ENCODE measurements at regions of chr2 and their contacts with region 1.

Region 1: GRCh38 chr2:161308178-161308955 is at the start of gene PSMD14:
- DNase-seq: peak; percentile 96
- H3K4me3 Mint-ChIP-seq: peak within 1 kb of the TSS; percentile 91
- H3K27ac Mint-ChIP-seq: peak within 1 kb of the TSS; percentile 92
- H3K4me1 Mint-ChIP-seq: peaks cover 37% of the 10 kb centered on the region
- H3K27me3 Mint-ChIP-seq: no peaks in the 10 kb centered on the region
- total RNA-seq, gene PSMD14: 84.2 to 89.8 TPM

Region 2: GRCh38 chr2:161136696-161137324 is 171.6 kb before region 1 on chr2:
- CTCF ChIA-PET with region 1: no interaction called
- POLR2A ChIA-PET with region 1: no interaction called
- intact Hi-C with region 1: loop called (anchors 1 kb)
- DNase-seq: peak; percentile 35
- H3K4me3 Mint-ChIP-seq: peak overlapping the region; percentile 96
- H3K27ac Mint-ChIP-seq: peak overlapping the region; percentile 100
- H3K4me1 Mint-ChIP-seq: peaks cover 45% of the 10 kb centered on the region
- H3K27me3 Mint-ChIP-seq: no peaks in the 10 kb centered on the region

Region 3: DNA sequence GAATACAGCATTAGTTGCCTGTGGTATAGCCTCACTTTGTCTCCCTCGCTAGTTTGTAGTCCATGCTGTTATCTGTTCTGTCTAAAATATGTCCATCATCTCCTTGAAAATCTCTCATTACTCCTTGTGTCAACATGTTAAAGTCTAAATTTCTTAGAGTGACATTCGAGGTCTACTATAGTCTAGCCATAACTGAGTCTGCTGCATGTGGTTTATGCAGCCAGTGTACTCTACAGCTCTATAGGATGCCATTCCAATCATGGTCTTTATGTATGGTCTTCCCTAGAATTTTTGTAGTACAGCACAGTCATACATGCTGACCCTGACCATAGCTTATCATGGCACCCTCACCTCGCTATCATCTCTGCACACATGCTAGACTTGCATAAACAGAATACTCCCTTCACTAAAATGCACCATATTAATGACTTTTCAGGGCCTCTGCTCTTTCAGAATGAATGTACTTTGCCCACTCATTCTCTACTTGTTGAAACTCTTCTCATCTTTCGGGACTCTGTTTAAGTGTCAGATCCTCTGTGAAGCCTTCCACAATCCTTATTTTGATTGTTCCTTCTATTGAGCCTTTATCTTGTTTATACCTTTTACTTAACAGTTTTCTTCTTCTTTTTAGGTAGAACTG is 135.3 kb before region 1 on chr2:
- CTCF ChIA-PET with region 1: no interaction called
- POLR2A ChIA-PET with region 1: no interaction called
- intact Hi-C with region 1: no loop called
- DNase-seq: peak; percentile 22
- H3K4me3 Mint-ChIP-seq: no peak overlapping the region
- H3K27ac Mint-ChIP-seq: peak overlapping the region; percentile 55
- H3K4me1 Mint-ChIP-seq: peaks cover 81% of the 10 kb centered on the region
- H3K27me3 Mint-ChIP-seq: no peaks in the 10 kb centered on the region

Region 4: DNA sequence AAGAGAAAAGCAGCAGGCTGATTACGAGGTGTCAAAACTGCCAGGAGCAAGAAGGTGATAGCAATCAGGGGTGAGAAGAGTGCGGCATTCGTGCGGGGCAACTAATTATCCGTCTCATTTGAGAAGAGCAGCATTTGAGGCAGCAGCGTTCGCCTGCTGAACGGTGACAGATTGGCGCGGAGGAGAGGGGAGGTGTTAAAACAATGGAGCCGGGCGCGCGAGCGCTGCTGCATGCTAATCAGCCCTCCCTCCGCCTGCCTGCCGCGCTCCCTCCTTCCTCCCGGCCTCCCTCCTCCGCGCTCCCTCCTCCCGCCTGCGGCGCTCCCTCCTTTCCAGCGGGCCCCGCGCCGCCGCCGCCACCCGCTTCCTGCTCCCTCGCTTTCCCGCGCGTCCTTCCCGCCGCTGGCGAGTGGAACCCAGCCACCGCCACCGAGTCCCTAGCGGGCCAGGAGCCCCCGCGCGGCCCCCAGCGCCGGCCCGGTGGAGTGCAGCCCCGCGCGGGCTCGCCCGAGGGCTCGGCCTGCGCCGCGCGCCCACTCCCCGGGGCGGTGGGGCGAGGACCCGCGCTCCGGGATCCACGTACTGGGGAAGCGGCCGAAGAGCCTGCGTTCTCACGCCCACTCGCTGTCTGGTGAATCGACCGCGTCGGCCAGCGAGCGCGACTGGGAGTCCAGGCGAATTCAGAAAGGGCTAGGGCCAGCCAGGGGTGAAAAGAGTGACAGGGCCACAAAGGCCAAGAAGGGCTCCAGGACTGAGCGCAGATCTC is 69.6 kb before region 1 on chr2:
- CTCF ChIA-PET with region 1: no interaction called
- POLR2A ChIA-PET with region 1: interaction called, 4 read pairs
- intact Hi-C with region 1: loop called (anchors 2 kb)
- DNase-seq: peak; percentile 71
- H3K4me3 Mint-ChIP-seq: peak overlapping the region; percentile 83
- H3K27ac Mint-ChIP-seq: peak overlapping the region; percentile 65
- H3K4me1 Mint-ChIP-seq: peaks cover 52% of the 10 kb centered on the region
- H3K27me3 Mint-ChIP-seq: no peaks in the 10 kb centered on the region

Region 5: GRCh38 chr2:161243905-161244304 is 64.5 kb before region 1 on chr2:
- CTCF ChIA-PET with region 1: no interaction called
- POLR2A ChIA-PET with region 1: interaction called, 4 read pairs
- intact Hi-C with region 1: loop called (anchors 1 kb)
- DNase-seq: peak; percentile 34
- H3K4me3 Mint-ChIP-seq: peak overlapping the region; percentile 89
- H3K27ac Mint-ChIP-seq: peak overlapping the region; percentile 91
- H3K4me1 Mint-ChIP-seq: peaks cover 54% of the 10 kb centered on the region
- H3K27me3 Mint-ChIP-seq: no peaks in the 10 kb centered on the region

Region 6: DNA sequence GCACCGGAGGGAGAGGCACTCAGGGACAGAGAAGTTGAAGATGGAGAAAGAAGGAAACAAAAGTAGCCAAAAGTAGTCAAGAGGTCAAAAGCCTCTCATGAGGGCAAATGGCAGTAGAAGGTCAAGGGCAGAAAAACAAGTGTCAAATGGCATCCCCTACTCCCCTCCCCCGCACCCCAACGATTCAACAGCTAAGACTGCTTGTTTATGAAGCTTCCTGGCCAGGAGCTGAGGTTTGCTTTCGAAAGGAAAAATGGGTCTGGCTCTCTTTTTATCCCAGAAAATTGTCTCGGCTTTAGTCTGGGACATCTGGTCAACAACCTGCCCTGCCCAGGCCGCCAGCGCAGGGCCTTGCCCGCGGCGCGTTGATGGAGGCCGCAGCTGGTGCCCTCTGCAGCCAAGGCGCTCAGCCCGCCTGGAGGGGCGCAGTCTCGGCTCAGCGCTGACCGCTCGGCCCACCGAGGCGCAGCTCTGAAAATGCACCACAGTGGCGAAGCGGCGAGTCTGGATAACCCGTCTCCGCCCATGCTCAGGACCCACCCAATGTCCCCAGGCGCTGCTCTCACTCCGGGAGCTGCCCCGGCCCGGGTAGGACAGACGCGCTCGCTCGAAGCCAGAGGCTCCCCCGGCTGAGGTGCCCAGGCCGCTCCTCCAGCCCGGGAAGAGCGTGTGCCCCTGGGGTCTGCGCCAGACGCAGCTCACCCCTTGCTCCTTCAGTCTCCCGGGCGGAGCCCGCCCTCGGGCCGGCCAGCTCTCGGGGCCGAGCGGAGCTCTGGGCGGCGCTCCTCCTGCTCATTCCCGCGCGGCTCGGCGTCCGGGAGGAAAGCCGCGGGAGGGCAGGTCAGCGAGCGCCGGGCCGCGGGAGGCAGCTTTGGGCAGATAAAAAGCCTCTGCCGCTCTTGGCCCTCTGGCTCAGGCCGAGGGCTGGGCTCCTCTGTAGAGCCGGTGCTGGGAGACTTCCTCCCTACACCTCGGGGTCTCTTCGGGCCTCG is 106.0 kb after region 1 on chr2:
- CTCF ChIA-PET with region 1: no interaction called
- POLR2A ChIA-PET with region 1: no interaction called
- intact Hi-C with region 1: loop called (anchors 5 kb)
- DNase-seq: no peak
- H3K4me3 Mint-ChIP-seq: peak overlapping the region; percentile 45
- H3K27ac Mint-ChIP-seq: no peak overlapping the region
- H3K4me1 Mint-ChIP-seq: peaks cover 47% of the 10 kb centered on the region
- H3K27me3 Mint-ChIP-seq: peaks cover 47% of the 10 kb centered on the region

Region 7: GRCh38 chr2:162318328-162319180 is 1010.2 kb after region 1 on chr2 and contains the start of gene IFIH1:
- CTCF ChIA-PET with region 1: no interaction called
- POLR2A ChIA-PET with region 1: no interaction called
- intact Hi-C with region 1: loop called (anchors 2 kb)
- DNase-seq: peak; percentile 87
- H3K4me3 Mint-ChIP-seq: peak within 1 kb of the TSS; percentile 85
- H3K27ac Mint-ChIP-seq: peak within 1 kb of the TSS; percentile 95
- H3K4me1 Mint-ChIP-seq: peaks cover 55% of the 10 kb centered on the region
- H3K27me3 Mint-ChIP-seq: no peaks in the 10 kb centered on the region
- total RNA-seq, gene IFIH1: 33.3 to 34.2 TPM